A549 (cell line): ENCODE measurements at regions of chr10 and their contacts with region 1.

Region 1: DNA sequence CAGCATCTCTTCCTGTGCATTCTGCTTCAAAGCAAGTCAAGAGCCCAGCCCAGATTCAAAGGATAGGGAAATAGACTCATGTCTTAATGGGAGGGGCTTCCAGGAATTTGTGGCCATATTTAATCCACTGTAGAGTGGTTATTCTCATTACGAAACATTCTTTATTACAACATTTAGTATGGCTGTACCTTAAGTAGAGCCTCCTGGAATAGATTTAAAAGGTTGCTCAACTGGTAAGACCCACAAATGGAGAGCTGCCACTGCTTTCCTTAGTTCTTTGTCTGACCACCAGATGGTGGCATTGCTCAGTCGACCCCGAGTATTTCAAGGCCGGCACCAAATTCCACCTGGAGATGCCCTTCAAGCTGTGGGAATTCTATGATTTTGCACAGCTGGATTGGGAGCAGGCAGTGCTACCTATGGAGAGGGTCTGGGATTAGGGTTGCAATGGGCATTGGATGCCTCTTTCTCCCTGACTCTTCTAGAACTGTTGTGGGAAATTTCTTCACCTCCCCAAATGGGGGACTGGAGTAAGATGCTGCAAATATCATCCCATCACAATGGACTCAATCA is 102.2 kb downstream of the RBM20 start:
- DNase-seq: peak; percentile 66 to 67
- ATAC-seq: peak; percentile 80 to 95
- H3K4me3 ChIP-seq: no peak overlapping the region
- H3K27ac ChIP-seq: no peak overlapping the region
- H3K4me1 ChIP-seq: no peaks in the 10 kb centered on the region
- CTCF ChIP-seq: peak; percentile 87
- EP300 ChIP-seq: no peak
- POLR2A ChIP-seq: no peak
- RAD21 ChIP-seq: peak; percentile 92 to 93

Region 2: GRCh38 chr10:110733218-110733952 is 13.0 kb before region 1 on chr10:
- CTCF ChIA-PET with region 1: interaction called, 13 read pairs
- POLR2A ChIA-PET with region 1: no interaction called
- DNase-seq: no peak
- ATAC-seq: peak; percentile 45 to 66; a peak in 4 of 6 replicates
- H3K4me3 ChIP-seq: peak overlapping the region; percentile 25; the same call in 2 of the 3 replicates
- H3K27ac ChIP-seq: peak overlapping the region; percentile 10 to 61; a peak in 4 of 6 replicates
- H3K4me1 ChIP-seq: peaks cover 17% of the 10 kb centered on the region; the same call in 2 of the 3 replicates
- CTCF ChIP-seq: no peak
- EP300 ChIP-seq: no peak
- POLR2A ChIP-seq: no peak
- RAD21 ChIP-seq: no peak

Region 3: GRCh38 chr10:110758898-110759297 is 12.6 kb after region 1 on chr10:
- CTCF ChIA-PET with region 1: interaction called, 11 read pairs
- POLR2A ChIA-PET with region 1: no interaction called
- DNase-seq: no peak
- ATAC-seq: no peak
- H3K4me3 ChIP-seq: no peak overlapping the region
- H3K27ac ChIP-seq: no peak overlapping the region
- H3K4me1 ChIP-seq: no peaks in the 10 kb centered on the region
- CTCF ChIP-seq: no peak
- EP300 ChIP-seq: no peak
- POLR2A ChIP-seq: no peak
- RAD21 ChIP-seq: no peak

Region 4: DNA sequence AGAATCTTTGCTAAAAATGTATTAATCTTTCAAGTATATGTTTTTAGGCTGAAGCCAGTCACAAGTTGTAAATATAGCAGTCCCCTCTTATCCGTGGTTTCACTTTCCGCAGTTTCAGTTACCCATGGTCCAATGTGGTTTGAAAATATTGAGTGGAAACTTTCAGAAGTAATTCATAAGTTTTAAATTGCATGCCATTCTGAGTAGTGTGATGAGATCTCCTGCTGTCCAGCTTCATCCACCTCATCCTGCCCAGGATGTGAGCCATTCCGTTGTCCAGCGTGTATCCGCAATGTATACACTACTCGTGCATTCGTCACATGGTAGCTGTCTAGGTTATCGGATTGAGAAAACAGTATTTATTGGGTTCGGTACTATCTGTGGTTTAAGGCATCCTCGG is 137.6 kb after region 1 on chr10:
- CTCF ChIA-PET with region 1: interaction called, 13 read pairs
- POLR2A ChIA-PET with region 1: no interaction called
- DNase-seq: no peak
- ATAC-seq: no peak
- H3K4me3 ChIP-seq: no peak overlapping the region
- H3K27ac ChIP-seq: no peak overlapping the region
- H3K4me1 ChIP-seq: peaks cover 32% of the 10 kb centered on the region
- CTCF ChIP-seq: no peak
- EP300 ChIP-seq: no peak
- POLR2A ChIP-seq: no peak
- RAD21 ChIP-seq: no peak

Region 5: GRCh38 chr10:110893559-110894179 is 147.3 kb after region 1 on chr10:
- CTCF ChIA-PET with region 1: interaction called, 24 read pairs
- POLR2A ChIA-PET with region 1: interaction called, 10 read pairs
- DNase-seq: peak; percentile 48 to 53
- ATAC-seq: peak; percentile 89 to 92
- H3K4me3 ChIP-seq: no peak overlapping the region
- H3K27ac ChIP-seq: no peak overlapping the region
- H3K4me1 ChIP-seq: peaks cover 7% of the 10 kb centered on the region; the same call in 1 of the 3 replicates
- CTCF ChIP-seq: peak; percentile 82
- EP300 ChIP-seq: no peak
- POLR2A ChIP-seq: no peak
- RAD21 ChIP-seq: peak; percentile 65 to 73

Region 6: GRCh38 chr10:110901954-110902819 is 155.8 kb after region 1 on chr10:
- CTCF ChIA-PET with region 1: interaction called, 10 read pairs
- POLR2A ChIA-PET with region 1: no interaction called
- DNase-seq: peak; percentile 28 to 47
- ATAC-seq: peak; percentile 72 to 89
- H3K4me3 ChIP-seq: no peak overlapping the region
- H3K27ac ChIP-seq: peak overlapping the region; percentile 64 to 78
- H3K4me1 ChIP-seq: peaks cover 25% of the 10 kb centered on the region
- CTCF ChIP-seq: no peak
- EP300 ChIP-seq: no peak
- POLR2A ChIP-seq: no peak
- RAD21 ChIP-seq: no peak